B cell (primary cell): ENCODE measurements at regions of chr17 and their contacts with region 1.

Region 1: DNA sequence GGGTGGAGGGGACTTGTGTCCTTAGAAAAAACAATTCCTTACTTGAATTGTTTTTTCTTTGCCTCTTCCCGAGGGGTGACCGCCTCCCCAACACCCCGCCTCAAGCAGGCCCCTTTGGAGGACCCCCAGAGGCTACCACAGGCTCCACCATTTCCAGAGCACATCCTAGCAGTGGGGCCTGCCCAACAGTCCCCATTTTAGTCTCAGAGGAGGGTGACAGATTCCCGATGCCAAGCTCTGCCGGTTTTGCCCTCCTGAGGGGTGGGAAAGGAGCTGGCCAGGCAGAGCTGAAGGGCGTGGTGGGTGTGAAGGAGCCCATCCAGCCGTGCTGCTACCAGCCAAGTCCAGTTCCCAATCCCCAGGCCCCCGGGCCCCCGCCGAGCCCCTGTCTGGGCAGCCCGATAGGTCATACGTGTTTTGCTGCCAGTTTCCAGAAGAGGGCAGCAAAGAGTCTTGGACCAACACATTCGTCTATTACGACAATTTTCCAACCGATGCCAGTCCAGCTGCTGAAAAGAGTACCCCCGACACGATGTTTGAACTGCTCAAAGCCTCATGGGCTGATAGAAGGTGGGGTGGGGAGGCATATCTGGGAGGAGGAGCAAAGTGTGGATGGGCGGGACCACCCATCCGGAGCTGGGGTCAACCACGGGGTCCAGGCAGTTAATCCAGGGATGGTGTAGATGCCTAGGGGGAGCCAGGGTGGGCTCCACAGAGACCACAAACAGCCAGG is 18.8 kb upstream of the GAA start:
- DNase-seq: peak; percentile 76
- ATAC-seq: peak; percentile 53
- H3K4me3 ChIP-seq: no peak overlapping the region
- H3K4me3 Mint-ChIP-seq: no peak overlapping the region
- H3K27ac ChIP-seq: no peak overlapping the region
- H3K27ac Mint-ChIP-seq: peak overlapping the region; percentile 21
- H3K4me1 ChIP-seq: peaks cover 0 to 7% of the 10 kb centered on the region in 2 donors
- H3K4me1 Mint-ChIP-seq: peaks cover 2% of the 10 kb centered on the region
- H3K27me3 ChIP-seq: peaks cover 0 to 9% (median 1%) of the 10 kb centered on the region in 4 experiments
- H3K27me3 Mint-ChIP-seq: peaks cover 9% of the 10 kb centered on the region
- CTCF ChIP-seq: peak; percentile 82

Region 2: GRCh38 chr17:80101011-80101945 is 18.7 kb after region 1 on chr17 and contains the start of gene GAA:
- CTCF ChIA-PET with region 1: interaction called, 13 read pairs
- POLR2A ChIA-PET with region 1: interaction called, 8 read pairs
- intact Hi-C with region 1: no loop called
- DNase-seq: peak; percentile 93
- ATAC-seq: peak; percentile 89
- H3K4me3 ChIP-seq: peak within 1 kb of the TSS; percentile 64 to 88 (median 84)
- H3K4me3 Mint-ChIP-seq: peak within 1 kb of the TSS; percentile 90
- H3K27ac ChIP-seq: peak within 1 kb of the TSS; percentile 65 to 81
- H3K27ac Mint-ChIP-seq: peak within 1 kb of the TSS; percentile 91
- H3K4me1 ChIP-seq: peaks cover 14 to 22% of the 10 kb centered on the region in 2 donors
- H3K4me1 Mint-ChIP-seq: peaks cover 24% of the 10 kb centered on the region
- H3K27me3 ChIP-seq: peaks cover 0 to 3% (median 0%) of the 10 kb centered on the region in 4 experiments
- H3K27me3 Mint-ChIP-seq: no peaks in the 10 kb centered on the region
- CTCF ChIP-seq: peak; percentile 86
- total RNA-seq, gene GAA: 39.4 and 40.0 TPM in 2 replicates

Region 3: DNA sequence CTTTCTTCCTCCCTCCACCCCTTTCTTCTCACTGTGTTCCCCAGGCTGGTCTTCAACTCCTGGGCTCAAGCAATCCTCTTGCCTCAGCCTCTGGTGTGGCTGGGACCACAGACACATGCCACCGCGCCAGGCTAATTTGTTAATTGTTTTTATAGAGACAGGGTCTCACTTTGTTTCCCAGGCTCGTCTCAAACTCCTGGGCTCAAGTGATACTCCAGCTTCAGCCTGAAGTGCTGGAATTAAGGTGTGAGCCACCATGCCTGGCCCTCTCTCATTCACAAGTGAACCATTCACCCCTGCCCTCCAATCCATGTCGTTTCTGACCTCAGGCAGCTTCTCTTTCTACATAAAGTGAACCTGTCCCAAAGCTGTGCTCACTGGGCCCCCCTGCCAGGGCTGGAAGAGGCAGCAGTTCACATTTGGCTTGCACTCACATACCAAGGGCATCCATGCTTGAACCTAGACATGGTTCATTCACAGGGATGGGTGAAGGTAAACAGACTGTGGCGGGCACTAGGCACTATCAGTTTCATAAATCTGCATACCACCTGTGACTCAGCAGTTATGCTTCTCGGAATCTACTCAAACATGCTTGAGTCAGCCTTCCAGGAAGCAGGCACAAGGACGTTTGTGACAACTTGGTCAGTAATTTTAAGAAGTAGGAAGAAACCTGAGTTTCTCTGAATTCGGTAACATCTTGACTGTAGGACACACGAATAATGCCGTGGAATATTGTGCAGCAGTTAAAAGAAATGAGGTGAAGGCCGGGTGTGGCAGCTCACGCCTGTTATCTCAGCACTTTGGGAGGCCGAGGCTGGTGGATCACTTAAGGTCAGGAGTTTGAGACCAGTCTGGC is 172.1 kb after region 1 on chr17:
- CTCF ChIA-PET with region 1: interaction called, 4 read pairs
- POLR2A ChIA-PET with region 1: no interaction called
- intact Hi-C with region 1: loop called (anchors 5 kb)
- DNase-seq: peak; percentile 68
- ATAC-seq: peak; percentile 56
- H3K4me3 ChIP-seq: no peak overlapping the region
- H3K4me3 Mint-ChIP-seq: peak overlapping the region; percentile 26
- H3K27ac ChIP-seq: no peak overlapping the region
- H3K27ac Mint-ChIP-seq: peak overlapping the region; percentile 61
- H3K4me1 ChIP-seq: peaks cover 6 to 11% of the 10 kb centered on the region in 2 donors
- H3K4me1 Mint-ChIP-seq: peaks cover 27% of the 10 kb centered on the region
- H3K27me3 ChIP-seq: no peaks in the 10 kb centered on the region
- H3K27me3 Mint-ChIP-seq: no peaks in the 10 kb centered on the region
- CTCF ChIP-seq: no peak